Testis (tissue), 5 donors: ENCODE measurements at regions of chr1 and their contacts with region 1.

Region 1: GRCh38 chr1:159889821-159890252 is 10.1 kb downstream of the CFAP45 start:
- DNase-seq: no peak
- H3K4me3 ChIP-seq: no peak overlapping the region
- H3K27ac ChIP-seq: no peak overlapping the region
- H3K4me1 ChIP-seq: no peaks in the 10 kb centered on the region
- H3K27me3 ChIP-seq: no peaks in the 10 kb centered on the region
- CTCF ChIP-seq: no peak
- POLR2A ChIP-seq: no peak

Region 2: DNA sequence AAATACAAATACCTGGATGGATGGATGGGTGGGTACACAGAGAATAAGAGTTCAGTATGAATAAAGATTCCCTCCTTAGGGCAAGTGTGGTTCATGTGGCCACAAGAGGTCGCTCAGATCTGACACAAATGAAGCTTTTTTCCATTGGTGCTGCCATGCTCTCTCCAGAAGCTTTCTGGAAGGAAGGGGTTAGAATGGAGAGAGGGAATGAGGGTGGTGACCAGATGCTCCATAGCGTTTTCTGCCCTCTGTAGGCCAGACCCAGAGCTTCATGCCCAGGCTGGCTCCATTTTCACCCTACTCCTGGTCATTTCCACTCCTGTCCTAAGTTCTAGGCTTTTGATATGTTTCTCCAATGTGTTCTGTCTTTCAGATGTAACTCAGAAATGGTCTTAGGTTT is 90.9 kb before region 1 on chr1:
- intact Hi-C with region 1: loop called (anchors 5 kb)
- DNase-seq: peak; percentile 75
- H3K4me3 ChIP-seq: no peak overlapping the region
- H3K27ac ChIP-seq: no peak overlapping the region
- H3K4me1 ChIP-seq: no peaks in the 10 kb centered on the region
- H3K27me3 ChIP-seq: no peaks in the 10 kb centered on the region
- CTCF ChIP-seq: peak; percentile 43 to 70 (median 62)
- POLR2A ChIP-seq: no peak

Region 3: DNA sequence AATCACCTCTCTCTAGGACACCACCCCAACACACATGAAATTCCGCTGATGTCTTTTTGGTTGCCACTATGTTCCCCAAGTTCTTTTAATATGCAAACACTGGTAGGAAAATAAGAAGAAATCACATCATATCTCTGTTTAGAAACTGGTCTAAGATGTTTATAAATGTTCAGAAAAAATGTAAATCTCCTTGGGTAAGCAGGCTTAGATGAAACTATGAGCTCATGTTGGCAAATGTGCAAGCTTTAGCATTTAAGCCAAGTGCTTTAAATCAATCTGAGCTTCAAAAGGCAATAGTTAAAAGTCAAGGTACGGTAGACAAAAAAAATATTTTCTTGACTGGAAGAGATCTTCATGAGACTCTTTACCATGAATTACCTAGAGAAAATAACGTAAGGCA is 89.4 kb after region 1 on chr1:
- intact Hi-C with region 1: no loop called
- DNase-seq: no peak
- H3K4me3 ChIP-seq: no peak overlapping the region
- H3K27ac ChIP-seq: no peak overlapping the region
- H3K4me1 ChIP-seq: no peaks in the 10 kb centered on the region
- H3K27me3 ChIP-seq: no peaks in the 10 kb centered on the region
- CTCF ChIP-seq: no peak
- POLR2A ChIP-seq: no peak